ENCODE measurements at regions of chr5 and their contacts with region 1.

Region 1: GRCh38 chr5:57173185-57174127 is at the start of gene GPBP1:
- DNase-seq: peak; percentile 97
- ATAC-seq: peak; percentile 86
- H3K4me3 ChIP-seq: peak within 1 kb of the TSS; percentile 95 to 98
- H3K27ac ChIP-seq: peak within 1 kb of the TSS; percentile 100
- H3K4me1 ChIP-seq: peaks cover 28 to 48% of the 10 kb centered on the region in 2 experiments
- H3K27me3 ChIP-seq: no peaks in the 10 kb centered on the region
- CTCF ChIP-seq: no peak
- POLR2A ChIP-seq: peak; percentile 48
- RAD21 ChIP-seq: no peak
- total RNA-seq, gene GPBP1: 69.5 TPM

Region 2: DNA sequence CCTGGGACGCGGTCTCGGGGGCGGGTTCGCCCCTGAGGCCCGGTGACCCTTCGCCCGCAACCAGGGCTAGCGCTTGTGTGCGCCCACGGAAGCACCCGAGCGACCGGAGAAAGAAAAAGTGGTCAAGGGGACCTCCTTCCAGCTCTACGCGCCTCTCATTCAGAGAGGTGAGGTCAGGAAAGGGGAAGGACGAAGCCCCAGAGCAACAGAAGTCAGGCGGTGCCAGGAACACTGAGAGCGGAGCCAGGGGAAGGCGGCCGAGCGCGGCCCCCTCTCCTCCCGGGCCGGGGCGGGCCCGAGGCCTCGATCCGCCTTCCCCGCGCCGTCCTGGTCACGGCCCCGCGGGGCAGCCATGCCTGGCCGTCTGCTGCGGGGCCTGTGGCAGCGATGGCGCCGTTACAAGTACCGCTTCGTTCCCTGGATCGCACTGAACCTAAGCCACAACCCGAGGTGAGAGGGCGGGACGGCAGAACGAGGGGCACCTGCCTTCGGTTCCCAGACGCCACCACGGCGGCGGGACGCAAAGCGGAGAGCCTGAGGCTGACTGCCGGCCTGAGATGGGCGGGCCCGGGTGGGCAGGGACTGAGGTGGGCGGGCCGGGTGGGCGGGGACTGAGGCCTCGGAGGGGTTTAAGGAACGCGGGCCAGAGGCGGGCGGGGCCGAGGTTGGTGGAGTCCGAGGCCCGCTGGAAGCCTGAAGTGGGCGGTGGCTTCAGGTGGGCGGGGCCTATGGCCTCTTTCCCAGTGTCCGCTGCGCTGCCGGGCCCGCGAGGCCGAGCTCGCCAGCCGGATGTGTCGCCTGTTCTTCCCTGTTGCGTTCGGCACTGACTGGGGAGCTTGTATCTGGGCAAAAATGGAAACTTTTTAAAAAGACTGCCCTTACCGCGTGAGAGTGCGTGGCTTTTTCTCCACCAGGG is 263.9 kb before region 1 on chr5 and contains the start of gene SETD9:
- CTCF ChIA-PET with region 1: no interaction called
- POLR2A ChIA-PET with region 1: no interaction called
- RAD21 ChIA-PET with region 1: no interaction called
- intact Hi-C with region 1: loop called (anchors 1 kb)
- DNase-seq: peak; percentile 88
- ATAC-seq: peak; percentile 91
- H3K4me3 ChIP-seq: peak within 1 kb of the TSS; percentile 64
- H3K27ac ChIP-seq: peak within 1 kb of the TSS; percentile 77
- H3K4me1 ChIP-seq: peaks cover 2 to 25% of the 10 kb centered on the region in 2 experiments; a peak in 3 of 4 replicates
- H3K27me3 ChIP-seq: no peaks in the 10 kb centered on the region
- CTCF ChIP-seq: no peak
- POLR2A ChIP-seq: peak; percentile 95
- RAD21 ChIP-seq: no peak
- total RNA-seq, gene SETD9: 10.9 TPM

Region 3: GRCh38 chr5:57032151-57032551 is 141.3 kb before region 1 on chr5:
- CTCF ChIA-PET with region 1: no interaction called
- POLR2A ChIA-PET with region 1: no interaction called
- RAD21 ChIA-PET with region 1: no interaction called
- intact Hi-C with region 1: loop called (anchors 5 kb)
- DNase-seq: peak; percentile 70
- ATAC-seq: peak; percentile 91
- H3K4me3 ChIP-seq: peak overlapping the region in 1 of 2 experiments; percentile 1; a peak in 2 of 4 replicates
- H3K27ac ChIP-seq: peak overlapping the region; percentile 36
- H3K4me1 ChIP-seq: peaks cover 36 to 50% of the 10 kb centered on the region in 2 experiments
- H3K27me3 ChIP-seq: no peaks in the 10 kb centered on the region
- CTCF ChIP-seq: no peak
- POLR2A ChIP-seq: no peak
- RAD21 ChIP-seq: no peak

Measured in HCT116 (cell line).